Dorsolateral prefrontal cortex (tissue), 120 donors: ENCODE measurements at regions of chr22 and their contacts with region 1.

Region 1: GRCh38 chr22:45957826-45958225 is 19.1 kb downstream of the WNT7B start:
- DNase-seq: no peak
- H3K4me3 ChIP-seq: no peak overlapping the region
- H3K27ac ChIP-seq: no peak overlapping the region
- H3K27me3 ChIP-seq: peaks cover 0 to 24% (median 0%) of the 10 kb centered on the region in 45 donors
- CTCF ChIP-seq: no peak

Region 2: DNA sequence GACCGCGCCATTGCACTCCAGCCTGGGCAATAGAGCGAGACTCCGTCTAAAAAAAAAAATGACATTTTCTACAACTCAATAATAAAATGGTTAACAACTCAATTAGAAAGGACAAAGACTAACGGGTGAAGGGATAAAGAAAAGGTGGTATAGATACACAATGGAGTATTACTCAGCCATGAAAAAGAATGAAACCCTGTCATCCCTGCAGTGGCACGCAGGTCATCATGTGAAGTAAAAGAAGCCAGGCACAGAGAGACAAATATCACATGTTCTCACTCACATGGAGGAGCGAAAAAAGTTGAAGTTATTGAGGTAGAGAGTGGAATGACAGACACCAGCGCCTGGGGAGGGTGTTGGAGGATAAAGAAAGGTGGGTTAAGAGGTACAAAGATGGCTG is 19.9 kb before region 1 on chr22:
- intact Hi-C with region 1: loop called in 1 of 2 experiments (anchors 2 kb)
- DNase-seq: no peak
- H3K4me3 ChIP-seq: no peak overlapping the region
- H3K27ac ChIP-seq: no peak overlapping the region
- H3K27me3 ChIP-seq: peaks cover 0 to 5% (median 0%) of the 10 kb centered on the region in 45 donors
- CTCF ChIP-seq: no peak